ACHN (cell line): ENCODE measurements at regions of chr17 and their contacts with region 1.

Region 1: DNA sequence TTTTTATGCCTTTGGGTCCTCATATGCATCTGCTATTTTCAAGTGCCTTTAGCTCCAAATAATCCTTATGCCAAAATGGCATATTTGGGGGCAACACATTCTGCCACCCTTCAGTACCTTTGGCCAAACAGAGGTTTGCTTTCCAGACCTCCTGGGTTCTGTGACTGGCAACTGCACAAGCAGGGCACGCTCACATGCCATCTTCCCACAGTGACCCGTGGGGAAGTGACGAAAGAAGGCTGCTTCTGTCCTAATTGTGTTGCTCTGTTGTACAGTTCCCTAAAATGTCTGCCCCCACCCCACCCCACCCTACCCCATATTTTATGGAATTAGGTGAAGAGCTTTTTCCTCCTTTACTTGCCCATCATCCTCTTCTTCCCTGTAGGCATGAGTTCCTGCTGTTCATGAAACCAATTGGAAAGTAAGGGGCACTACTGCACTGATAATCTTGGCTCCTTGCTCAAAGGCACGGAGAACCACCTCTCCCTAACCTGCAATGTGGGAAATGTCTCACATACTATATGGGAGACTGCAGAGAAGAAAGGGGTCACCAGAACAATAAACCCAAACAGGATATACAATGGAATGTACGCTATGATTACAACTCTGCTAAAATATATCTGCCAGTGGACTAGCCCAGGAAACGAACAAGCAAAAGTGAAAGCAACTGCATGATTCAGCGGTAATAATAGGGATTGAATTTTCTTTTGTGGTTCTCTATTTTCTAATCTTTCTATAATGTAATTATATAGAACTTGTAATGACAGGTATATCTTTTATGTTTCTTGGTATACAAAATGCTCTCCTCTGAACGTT is 3.3 kb upstream of the SLFN12L start:
- DNase-seq: peak; percentile 27

Region 2: DNA sequence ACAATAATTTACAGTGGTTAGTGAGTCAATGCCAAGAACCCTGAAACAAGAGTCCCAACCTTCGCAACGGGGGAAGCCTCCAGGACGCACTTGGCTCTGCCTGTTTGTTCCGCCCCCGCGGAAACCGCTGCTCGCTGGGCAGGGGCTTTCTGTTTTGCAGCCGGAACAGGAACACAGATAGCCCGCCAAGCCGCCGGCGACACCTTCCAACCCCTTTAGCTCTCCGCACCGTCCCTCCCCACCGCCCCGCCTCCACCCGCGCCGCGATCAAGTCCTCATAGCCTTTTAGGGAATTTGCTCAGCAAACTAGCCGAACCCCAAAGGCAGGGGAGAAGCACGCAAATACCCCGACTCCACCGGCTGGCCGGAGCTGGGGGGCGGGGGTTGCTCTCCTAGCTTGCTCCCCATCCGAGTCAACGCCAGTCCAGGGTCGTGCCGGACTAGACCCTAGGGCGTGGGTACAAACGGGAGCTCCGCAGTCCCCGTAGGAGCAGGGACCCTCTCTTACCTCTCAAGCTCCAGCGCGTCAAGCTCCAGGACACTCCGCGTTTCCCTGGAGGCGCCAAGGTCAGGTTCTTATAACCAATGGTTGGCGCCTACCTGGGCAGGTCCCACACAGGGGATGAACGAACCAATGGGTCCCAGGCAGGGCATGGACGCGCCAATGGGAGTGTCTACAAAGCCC is 92.4 kb before region 1 on chr17 and contains the start of gene SLFN13:
- in situ Hi-C with region 1: loop called (anchors 25 kb)
- DNase-seq: peak; percentile 93

Region 3: GRCh38 chr17:35476283-35476820 is 64.4 kb before region 1 on chr17:
- in situ Hi-C with region 1: no loop called
- DNase-seq: no peak